K562 (cell line): ENCODE measurements at regions of chr11 and their contacts with region 1.

Region 1: GRCh38 chr11:64924102-64924851 is at the start of gene PPP2R5B:
- DNase-seq: peak; percentile 94 to 95 (median 95)
- ATAC-seq: peak; percentile 98
- H3K4me3 ChIP-seq: peak within 1 kb of the TSS; percentile 60
- H3K27ac ChIP-seq: peak within 1 kb of the TSS; percentile 94
- H3K4me1 ChIP-seq: peaks cover 14 to 41% of the 10 kb centered on the region in 2 experiments; a peak in 4 of 5 replicates
- H3K27me3 ChIP-seq: no peaks in the 10 kb centered on the region
- CTCF ChIP-seq: peak in 1 of 3 experiments; percentile 17; a peak in 1 of 6 replicates
- EP300 ChIP-seq: peak; percentile 46
- POLR2A ChIP-seq: peak; percentile 53
- RAD21 ChIP-seq: no peak
- polyA plus RNA-seq, gene PPP2R5B: 0.10 to 0.13 TPM

Region 2: GRCh38 chr11:64934682-64935358 is 10.5 kb after region 1 on chr11:
- CTCF ChIA-PET with region 1: no interaction called
- POLR2A ChIA-PET with region 1: interaction called, 14 read pairs
- in situ Hi-C with region 1: no loop called
- intact Hi-C with region 1: no loop called
- DNase-seq: no peak
- ATAC-seq: peak; percentile 39
- H3K4me3 ChIP-seq: no peak overlapping the region
- H3K27ac ChIP-seq: no peak overlapping the region
- H3K4me1 ChIP-seq: peaks cover 8 to 28% of the 10 kb centered on the region in 2 experiments; a peak in 4 of 5 replicates
- H3K27me3 ChIP-seq: no peaks in the 10 kb centered on the region
- CTCF ChIP-seq: no peak
- EP300 ChIP-seq: no peak
- POLR2A ChIP-seq: no peak
- RAD21 ChIP-seq: no peak

Region 3: GRCh38 chr11:64971421-64972233 is 47.4 kb after region 1 on chr11 and contains the start of gene MAJIN:
- CTCF ChIA-PET with region 1: no interaction called
- POLR2A ChIA-PET with region 1: no interaction called
- in situ Hi-C with region 1: no loop called
- intact Hi-C with region 1: no loop called
- DNase-seq: peak; percentile 92 to 95 (median 94)
- ATAC-seq: peak; percentile 93
- H3K4me3 ChIP-seq: 0 out of 2 replicates have a peak within 1 kb of the TSS, but pooled peaks have one; percentile 2
- H3K27ac ChIP-seq: peak within 1 kb of the TSS; percentile 72
- H3K4me1 ChIP-seq: peaks cover 4 to 12% of the 10 kb centered on the region in 2 experiments; a peak in 4 of 5 replicates
- H3K27me3 ChIP-seq: no peaks in the 10 kb centered on the region
- CTCF ChIP-seq: no peak
- EP300 ChIP-seq: no peak
- POLR2A ChIP-seq: 0 out of 2 replicates have a peak, but pooled peaks have one; percentile 32
- RAD21 ChIP-seq: no peak
- polyA plus RNA-seq, gene MAJIN: 0.21 TPM in 1 of 2 experiments, not detected in the other